Activated T-helper 2 cell treated with anti-CD3 and anti-CD28 coated beads, Interferon-gamma antibody, Interleukin-2, Interleukin-4, amounts not matched to agents 10 μg/mL and 5 μg/mL and 100 μg/mL, durations not matched to agents 14 hours and 24 hours and 36 hours (primary cell): ENCODE measurements at regions of chr12 and their contacts with region 1.

Region 1: DNA sequence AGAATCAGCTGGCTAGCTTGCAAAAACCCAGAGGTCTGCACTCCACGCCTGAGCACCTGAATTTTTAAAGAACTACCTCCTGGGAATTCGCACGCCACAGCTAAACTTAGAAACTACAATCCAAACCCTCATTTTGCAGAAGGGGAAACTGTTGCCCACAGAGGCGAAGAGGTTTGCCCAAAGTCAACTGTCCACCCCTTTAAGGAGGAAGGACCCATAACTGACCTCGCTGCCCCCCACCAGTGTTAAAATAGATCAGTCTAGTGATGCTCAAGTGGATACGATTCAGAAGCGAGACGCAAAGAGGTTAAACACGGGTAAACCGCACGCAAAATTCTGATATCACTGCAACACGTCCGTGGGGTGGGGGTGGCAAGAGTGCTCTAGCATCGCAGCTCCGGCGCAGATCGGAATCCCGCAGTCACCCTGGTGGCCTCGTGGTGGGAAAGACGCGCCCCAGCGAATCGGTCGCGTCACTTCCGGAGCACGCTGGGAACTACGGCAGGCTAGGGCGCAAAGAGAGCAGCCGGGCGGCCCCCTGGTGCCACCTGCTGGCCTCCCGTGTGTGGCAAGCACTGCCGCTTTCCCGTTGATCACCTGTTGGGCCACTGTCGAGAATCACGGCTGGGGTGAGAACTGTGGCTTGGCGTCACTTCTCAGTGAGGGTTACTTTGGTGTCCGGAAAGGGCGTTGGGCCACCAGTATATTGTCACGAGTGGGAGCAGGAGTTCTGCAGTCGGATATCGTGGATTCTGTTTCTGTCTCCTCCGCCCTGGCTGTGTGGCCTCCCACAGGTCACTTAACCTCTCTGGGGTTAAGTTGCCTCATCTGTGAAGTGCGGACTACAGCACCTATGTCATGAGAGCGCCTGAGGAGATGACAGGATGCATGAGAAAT is at the start of gene ALKBH2:
- DNase-seq: peak; percentile 90
- H3K4me3 Mint-ChIP-seq: peak within 1 kb of the TSS; percentile 77
- H3K27ac Mint-ChIP-seq: peak within 1 kb of the TSS; percentile 71
- H3K4me1 Mint-ChIP-seq: peaks cover 33% of the 10 kb centered on the region
- H3K27me3 Mint-ChIP-seq: no peaks in the 10 kb centered on the region
- total RNA-seq, gene ALKBH2: 33.4 and 34.9 TPM in 2 replicates

Region 2: GRCh38 chr12:108514973-108515814 is 578.1 kb before region 1 on chr12 and contains the start of gene FICD:
- intact Hi-C with region 1: loop called (anchors 5 kb)
- DNase-seq: peak; percentile 99
- H3K4me3 Mint-ChIP-seq: peak within 1 kb of the TSS; percentile 86
- H3K27ac Mint-ChIP-seq: peak within 1 kb of the TSS; percentile 78
- H3K4me1 Mint-ChIP-seq: peaks cover 27% of the 10 kb centered on the region
- H3K27me3 Mint-ChIP-seq: no peaks in the 10 kb centered on the region
- total RNA-seq, gene FICD: 5.8 and 7.1 TPM in 2 replicates

Region 3: GRCh38 chr12:108826101-108826806 is 267.0 kb before region 1 on chr12:
- intact Hi-C with region 1: loop called (anchors 10 kb)
- DNase-seq: no peak
- H3K4me3 Mint-ChIP-seq: peak overlapping the region; percentile 53
- H3K27ac Mint-ChIP-seq: peak overlapping the region; percentile 76
- H3K4me1 Mint-ChIP-seq: peaks cover 69% of the 10 kb centered on the region
- H3K27me3 Mint-ChIP-seq: no peaks in the 10 kb centered on the region

Region 4: GRCh38 chr12:108884116-108885012 is 208.9 kb before region 1 on chr12:
- intact Hi-C with region 1: loop called (anchors 1 kb)
- DNase-seq: peak; percentile 43
- H3K4me3 Mint-ChIP-seq: no peak overlapping the region
- H3K27ac Mint-ChIP-seq: no peak overlapping the region
- H3K4me1 Mint-ChIP-seq: no peaks in the 10 kb centered on the region
- H3K27me3 Mint-ChIP-seq: no peaks in the 10 kb centered on the region

Region 5: DNA sequence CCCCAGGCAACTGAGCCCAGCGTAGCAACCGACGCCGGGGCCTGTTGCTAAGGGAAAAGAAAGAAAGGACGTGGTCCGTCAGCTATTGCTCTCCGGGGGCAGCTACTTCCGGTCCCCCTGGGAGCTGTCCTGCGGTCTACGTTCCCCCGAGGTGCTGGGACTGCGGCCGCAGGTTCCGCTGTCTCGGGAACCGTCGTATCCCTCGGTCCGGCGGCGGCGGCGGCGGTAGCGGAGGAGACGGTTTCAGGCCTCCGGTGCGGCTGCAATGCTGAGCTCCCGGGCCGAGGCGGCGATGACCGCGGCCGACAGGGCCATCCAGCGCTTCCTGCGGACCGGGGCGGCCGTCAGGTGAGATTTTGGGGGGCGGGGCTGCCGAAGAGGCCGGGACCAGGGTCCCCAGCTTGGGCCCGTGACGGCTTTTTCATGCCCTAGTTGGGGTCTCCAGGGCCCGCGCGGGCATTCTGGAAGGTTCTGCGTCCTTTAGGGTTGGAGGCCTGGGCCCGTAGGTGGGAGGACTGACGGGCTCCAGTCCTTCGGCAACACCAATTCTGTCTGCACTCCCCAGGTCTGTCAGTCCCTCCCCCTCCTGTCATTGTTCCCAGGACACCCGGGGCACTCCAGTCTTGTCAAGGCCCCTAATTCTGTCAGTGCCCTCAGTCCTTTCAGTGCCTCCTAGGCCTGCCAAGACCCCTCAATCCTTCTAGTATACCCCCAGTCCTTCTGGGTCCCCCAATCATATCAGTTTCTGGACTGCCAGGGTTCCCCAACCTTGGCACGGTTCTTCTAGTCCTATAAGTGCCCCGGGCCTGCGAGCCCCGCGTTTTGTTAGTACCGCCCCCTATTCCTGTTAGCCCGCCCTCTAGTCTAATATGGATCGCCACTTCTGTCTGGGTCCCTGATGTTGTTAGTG is 40.6 kb before region 1 on chr12 and contains the start of gene USP30:
- intact Hi-C with region 1: loop called (anchors 1 kb)
- DNase-seq: peak; percentile 80
- H3K4me3 Mint-ChIP-seq: peak within 1 kb of the TSS; percentile 96
- H3K27ac Mint-ChIP-seq: peak within 1 kb of the TSS; percentile 98
- H3K4me1 Mint-ChIP-seq: peaks cover 11% of the 10 kb centered on the region
- H3K27me3 Mint-ChIP-seq: no peaks in the 10 kb centered on the region
- total RNA-seq, gene USP30: 6.8 and 7.3 TPM in 2 replicates

Region 6: GRCh38 chr12:109573029-109573913 is 480.0 kb after region 1 on chr12 and contains the starts of genes MMAB and MVK:
- intact Hi-C with region 1: loop called (anchors 10 kb)
- DNase-seq: peak; percentile 99
- H3K4me3 Mint-ChIP-seq: peak within 1 kb of the TSS; percentile 93
- H3K27ac Mint-ChIP-seq: peak within 1 kb of the TSS; percentile 92
- H3K4me1 Mint-ChIP-seq: peaks cover 30% of the 10 kb centered on the region
- H3K27me3 Mint-ChIP-seq: no peaks in the 10 kb centered on the region
- total RNA-seq, gene MMAB: 56.7 and 59.0 TPM in 2 replicates
- total RNA-seq, gene MVK: 28.7 and 33.6 TPM in 2 replicates